ENCODE measurements at regions of chr19 and their contacts with region 1.

Region 1: DNA sequence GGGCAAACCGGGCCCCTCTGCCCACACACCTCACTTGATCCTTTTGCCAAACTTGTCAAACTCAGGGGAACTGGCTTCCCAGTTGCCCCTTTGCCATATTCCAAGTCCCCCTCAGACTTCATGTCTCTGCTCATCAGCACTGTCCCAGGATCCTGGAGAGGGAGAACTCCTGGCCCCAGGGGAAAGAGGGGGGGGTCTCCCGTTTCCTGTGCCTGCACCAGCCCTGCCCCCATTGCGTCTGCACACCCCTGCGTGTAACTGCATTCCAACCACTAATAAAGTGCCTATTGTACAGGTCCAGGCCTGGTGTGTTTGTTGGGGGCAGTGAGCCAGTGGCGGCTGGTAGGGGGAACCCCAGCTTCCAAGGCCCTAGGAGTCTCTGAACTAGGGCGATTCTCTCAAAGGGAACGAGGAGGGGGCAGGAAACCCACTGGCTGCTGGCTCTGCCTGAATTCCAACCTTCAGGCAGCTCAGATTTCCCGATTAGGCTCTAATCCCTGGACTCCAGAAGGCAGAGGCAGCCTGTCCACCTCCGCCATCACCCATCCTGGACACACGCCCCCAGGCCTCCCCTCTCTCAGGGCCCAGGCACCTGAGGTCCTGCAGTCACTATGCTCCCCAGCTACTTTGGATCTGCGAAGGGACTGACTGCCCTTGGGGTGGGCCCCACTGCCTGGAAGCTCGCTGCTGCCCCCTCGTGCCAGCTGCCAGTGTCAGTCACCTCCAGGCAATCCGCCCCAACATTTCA is 9.7 kb upstream of the ILF3 start:
- DNase-seq: peak; percentile 89
- CTCF ChIP-seq: peak; percentile 95

Region 2: GRCh38 chr19:10543420-10544241 is 100.8 kb before region 1 on chr19 and contains the start of gene ATG4D:
- CTCF ChIA-PET with region 1: interaction called, 13 read pairs
- POLR2A ChIA-PET with region 1: no interaction called
- DNase-seq: peak; percentile 97
- CTCF ChIP-seq: no peak

Region 3: DNA sequence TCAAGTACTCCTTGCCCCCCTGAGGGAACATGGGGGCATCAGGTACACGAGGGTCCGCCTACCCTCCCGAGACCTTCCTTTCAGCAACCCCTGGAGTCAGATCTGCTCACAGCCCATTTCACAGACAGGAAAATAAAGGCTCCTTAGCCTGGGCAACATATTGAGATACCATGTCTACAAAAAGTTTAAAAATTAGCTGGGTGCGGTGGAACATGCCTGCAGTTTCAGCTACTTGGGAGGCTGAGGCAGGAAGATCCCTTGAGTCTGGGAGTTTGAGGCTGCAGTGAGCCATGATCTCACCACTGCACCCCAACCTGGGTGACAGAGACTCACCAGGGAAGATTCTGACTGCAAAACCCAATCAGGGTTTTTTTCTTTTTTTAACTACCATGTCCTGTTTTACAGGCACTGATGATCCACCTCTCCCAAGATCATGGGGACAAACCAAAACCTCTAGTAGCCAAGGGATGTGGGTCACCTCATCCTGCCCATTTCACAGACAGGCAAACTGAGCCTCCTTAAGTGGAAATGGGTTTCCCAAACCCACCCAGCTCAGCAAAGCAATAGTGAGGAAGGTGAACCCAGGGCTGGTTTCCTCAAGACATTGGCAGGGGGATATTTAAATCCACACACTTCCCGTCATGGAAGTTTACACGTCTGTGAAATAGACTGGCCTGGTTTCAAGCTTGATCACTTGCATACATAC is 69.3 kb before region 1 on chr19:
- CTCF ChIA-PET with region 1: interaction called, 340 read pairs
- POLR2A ChIA-PET with region 1: no interaction called
- DNase-seq: no peak
- CTCF ChIP-seq: no peak

Region 4: DNA sequence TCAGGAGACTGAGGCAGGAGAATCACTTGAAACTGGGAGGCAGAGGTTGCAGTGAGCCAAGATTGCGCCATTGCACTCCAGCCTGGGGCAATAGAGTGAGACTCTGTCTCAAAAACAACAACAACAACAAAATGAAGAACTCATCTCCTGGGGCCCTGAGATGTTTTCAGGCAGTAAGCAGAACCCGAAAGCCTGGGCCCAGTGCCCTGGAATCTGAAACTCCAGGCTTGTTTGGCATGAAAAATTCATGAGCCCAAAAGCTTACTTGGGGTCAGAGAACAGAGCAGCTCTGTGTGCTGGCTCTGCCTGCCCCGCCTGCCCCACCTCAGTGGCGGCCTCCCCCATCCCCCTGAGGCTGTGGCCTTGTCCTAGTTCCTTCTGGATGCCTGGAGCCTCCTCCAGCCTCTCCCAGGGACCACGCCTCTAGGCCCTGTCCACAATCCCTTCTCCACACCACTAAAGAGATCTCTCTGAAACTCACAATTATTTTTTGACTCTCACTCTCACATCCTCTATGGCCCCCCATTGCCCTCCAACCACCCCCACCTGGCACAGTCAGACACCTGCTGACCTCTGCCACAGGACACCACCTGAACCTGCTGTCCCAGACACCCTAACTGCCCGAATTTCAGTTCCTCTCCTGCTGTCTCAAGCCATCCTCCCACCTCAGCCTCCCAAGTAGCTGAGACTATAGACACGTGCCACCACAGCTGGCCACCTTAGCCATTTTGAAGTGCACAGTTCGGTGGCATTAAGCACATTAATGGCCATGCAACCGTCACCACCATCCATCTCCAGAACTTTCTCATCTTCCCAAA is 50.4 kb before region 1 on chr19:
- CTCF ChIA-PET with region 1: interaction called, 71 read pairs
- POLR2A ChIA-PET with region 1: no interaction called
- DNase-seq: no peak
- CTCF ChIP-seq: no peak

Region 5: GRCh38 chr19:10602330-10603083 is 41.9 kb before region 1 on chr19:
- CTCF ChIA-PET with region 1: interaction called, 71 read pairs
- POLR2A ChIA-PET with region 1: interaction called, 3 read pairs
- DNase-seq: peak; percentile 98
- CTCF ChIP-seq: no peak

Region 6: DNA sequence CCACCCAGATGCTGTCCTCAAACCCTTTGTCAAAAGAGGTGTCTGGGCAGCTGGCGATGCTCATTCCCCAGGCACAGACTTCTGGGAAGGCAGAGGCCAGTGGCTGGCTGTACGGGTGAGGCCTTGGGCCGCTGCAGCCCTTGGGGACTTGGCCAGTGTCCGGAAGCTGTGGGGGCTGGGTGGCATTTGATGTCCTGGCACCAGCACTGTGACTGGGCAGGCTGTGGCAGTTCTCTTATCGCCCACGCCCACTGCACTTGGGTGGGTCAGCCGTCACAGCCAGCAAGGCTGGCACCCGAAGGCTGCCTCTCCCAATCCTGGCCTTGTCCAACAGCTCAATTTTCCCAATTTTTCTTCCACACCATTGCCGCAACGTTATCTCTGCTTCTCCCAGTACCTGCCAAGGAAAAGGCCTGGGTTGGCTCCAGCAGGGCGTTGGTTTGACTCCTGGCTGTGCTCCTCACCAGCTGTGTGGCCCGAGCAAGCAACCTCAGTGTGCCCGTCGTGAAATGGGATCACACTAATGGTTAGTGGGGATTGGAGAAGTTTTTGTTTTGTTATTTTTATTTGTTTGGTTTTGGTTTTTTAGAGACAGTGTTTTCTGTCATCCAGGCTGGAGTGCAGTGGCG is 31.8 kb before region 1 on chr19:
- CTCF ChIA-PET with region 1: interaction called, 14 read pairs
- POLR2A ChIA-PET with region 1: interaction called, 9 read pairs
- DNase-seq: peak; percentile 13
- CTCF ChIP-seq: no peak

Region 7: DNA sequence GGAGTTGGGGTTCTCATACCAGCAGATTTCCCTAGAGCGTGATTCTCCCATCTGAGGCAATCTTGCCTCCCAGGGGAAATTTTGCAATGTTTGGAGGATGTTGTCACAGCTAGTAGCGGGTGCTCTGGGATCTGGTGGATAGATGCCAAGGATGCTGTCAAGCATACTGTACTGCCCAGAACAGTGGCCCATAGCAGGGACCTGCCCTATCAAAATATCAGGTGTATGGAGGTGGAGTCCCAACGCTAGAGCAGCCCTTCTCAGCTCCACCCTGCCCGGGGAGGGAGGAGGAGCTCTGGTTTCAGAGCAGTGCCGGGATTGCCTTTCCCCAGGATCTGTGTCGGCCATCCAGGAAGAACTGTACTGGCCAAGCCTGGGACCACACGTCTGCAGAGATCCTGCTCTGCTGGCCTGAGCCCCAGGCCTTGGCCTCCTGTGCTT is 45.9 kb after region 1 on chr19:
- CTCF ChIA-PET with region 1: interaction called, 8 read pairs
- POLR2A ChIA-PET with region 1: interaction called, 10 read pairs
- DNase-seq: no peak
- CTCF ChIP-seq: no peak

Measured in GM10248 (cell line).